ENCODE measurements at regions of chr11 and their contacts with region 1.

Region 1: GRCh38 chr11:64317957-64318693 is at the start of gene PRDX5:
- DNase-seq: peak; percentile 96
- ATAC-seq: peak; percentile 80
- H3K4me3 Mint-ChIP-seq: peak within 1 kb of the TSS; percentile 89
- H3K27ac Mint-ChIP-seq: peak within 1 kb of the TSS; percentile 100
- H3K4me1 Mint-ChIP-seq: peaks cover 47% of the 10 kb centered on the region
- H3K27me3 Mint-ChIP-seq: no peaks in the 10 kb centered on the region
- total RNA-seq, gene PRDX5: 102 to 106 TPM

Region 2: GRCh38 chr11:64240394-64241174 is 77.5 kb before region 1 on chr11 and contains the start of gene FKBP2:
- CTCF ChIA-PET with region 1: interaction called, 4 read pairs
- POLR2A ChIA-PET with region 1: interaction called, 12 read pairs
- DNase-seq: peak; percentile 98
- ATAC-seq: peak; percentile 76
- H3K4me3 Mint-ChIP-seq: peak within 1 kb of the TSS; percentile 89
- H3K27ac Mint-ChIP-seq: peak within 1 kb of the TSS; percentile 98
- H3K4me1 Mint-ChIP-seq: peaks cover 44% of the 10 kb centered on the region
- H3K27me3 Mint-ChIP-seq: no peaks in the 10 kb centered on the region
- total RNA-seq, gene FKBP2: 26.9 to 33.0 TPM

Region 3: GRCh38 chr11:64269380-64270234 is 48.5 kb before region 1 on chr11:
- CTCF ChIA-PET with region 1: interaction called, 12 read pairs
- POLR2A ChIA-PET with region 1: interaction called, 23 read pairs
- DNase-seq: peak; percentile 97
- ATAC-seq: peak; percentile 74
- H3K4me3 Mint-ChIP-seq: peak overlapping the region; percentile 93
- H3K27ac Mint-ChIP-seq: peak overlapping the region; percentile 97
- H3K4me1 Mint-ChIP-seq: peaks cover 34% of the 10 kb centered on the region
- H3K27me3 Mint-ChIP-seq: no peaks in the 10 kb centered on the region

Region 4: DNA sequence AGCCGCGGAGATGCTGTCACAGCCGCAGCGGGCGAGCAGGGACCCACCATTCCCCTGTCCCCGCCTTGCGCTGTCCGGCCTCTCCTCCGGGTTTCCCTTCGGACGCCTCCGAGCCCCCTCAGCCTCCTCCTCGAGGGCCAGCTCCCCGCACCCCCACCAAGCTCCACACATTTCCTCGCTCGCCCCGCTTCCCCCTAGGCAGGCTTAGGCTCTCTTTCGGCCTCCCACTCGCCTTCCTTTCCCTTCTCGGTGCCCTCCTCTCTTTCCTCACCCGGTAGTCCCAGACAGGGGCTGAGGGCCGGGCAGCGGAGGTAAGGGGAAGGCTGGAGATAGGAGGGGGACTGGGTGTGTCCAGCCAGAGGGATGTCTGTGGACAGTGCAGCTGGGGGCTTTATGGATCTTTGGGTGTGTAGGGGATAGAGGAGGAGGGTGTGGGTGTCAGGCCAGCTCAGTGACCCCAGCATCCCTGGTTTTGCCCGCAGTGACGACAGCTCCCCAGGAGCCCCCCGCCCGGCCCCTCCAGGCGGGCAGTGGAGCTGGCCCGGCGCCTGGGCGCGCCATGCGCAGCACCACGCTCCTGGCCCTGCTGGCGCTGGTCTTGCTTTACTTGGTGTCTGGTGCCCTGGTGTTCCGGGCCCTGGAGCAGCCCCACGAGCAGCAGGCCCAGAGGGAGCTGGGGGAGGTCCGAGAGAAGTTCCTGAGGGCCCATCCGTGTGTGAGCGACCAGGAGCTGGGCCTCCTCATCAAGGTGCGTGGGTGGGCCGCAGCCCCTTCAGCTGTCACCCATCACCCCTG is 25.5 kb before region 1 on chr11:
- CTCF ChIA-PET with region 1: no interaction called
- POLR2A ChIA-PET with region 1: no interaction called
- DNase-seq: no peak
- ATAC-seq: peak; percentile 6
- H3K4me3 Mint-ChIP-seq: no peak overlapping the region
- H3K27ac Mint-ChIP-seq: no peak overlapping the region
- H3K4me1 Mint-ChIP-seq: peaks cover 17% of the 10 kb centered on the region
- H3K27me3 Mint-ChIP-seq: peaks cover 62% of the 10 kb centered on the region

Region 5: GRCh38 chr11:64331557-64332371 is 13.6 kb after region 1 on chr11:
- CTCF ChIA-PET with region 1: interaction called, 137 read pairs
- POLR2A ChIA-PET with region 1: interaction called, 44 read pairs
- DNase-seq: peak; percentile 89
- ATAC-seq: peak; percentile 95
- H3K4me3 Mint-ChIP-seq: peak overlapping the region; percentile 1
- H3K27ac Mint-ChIP-seq: peak overlapping the region; percentile 86
- H3K4me1 Mint-ChIP-seq: peaks cover 38% of the 10 kb centered on the region
- H3K27me3 Mint-ChIP-seq: peaks cover 2% of the 10 kb centered on the region

Region 6: GRCh38 chr11:64341851-64342791 is 24.0 kb after region 1 on chr11:
- CTCF ChIA-PET with region 1: interaction called, 47 read pairs
- POLR2A ChIA-PET with region 1: interaction called, 37 read pairs
- DNase-seq: peak; percentile 95
- ATAC-seq: peak; percentile 84
- H3K4me3 Mint-ChIP-seq: peak overlapping the region; percentile 80
- H3K27ac Mint-ChIP-seq: no peak overlapping the region
- H3K4me1 Mint-ChIP-seq: peaks cover 55% of the 10 kb centered on the region
- H3K27me3 Mint-ChIP-seq: no peaks in the 10 kb centered on the region

Region 7: DNA sequence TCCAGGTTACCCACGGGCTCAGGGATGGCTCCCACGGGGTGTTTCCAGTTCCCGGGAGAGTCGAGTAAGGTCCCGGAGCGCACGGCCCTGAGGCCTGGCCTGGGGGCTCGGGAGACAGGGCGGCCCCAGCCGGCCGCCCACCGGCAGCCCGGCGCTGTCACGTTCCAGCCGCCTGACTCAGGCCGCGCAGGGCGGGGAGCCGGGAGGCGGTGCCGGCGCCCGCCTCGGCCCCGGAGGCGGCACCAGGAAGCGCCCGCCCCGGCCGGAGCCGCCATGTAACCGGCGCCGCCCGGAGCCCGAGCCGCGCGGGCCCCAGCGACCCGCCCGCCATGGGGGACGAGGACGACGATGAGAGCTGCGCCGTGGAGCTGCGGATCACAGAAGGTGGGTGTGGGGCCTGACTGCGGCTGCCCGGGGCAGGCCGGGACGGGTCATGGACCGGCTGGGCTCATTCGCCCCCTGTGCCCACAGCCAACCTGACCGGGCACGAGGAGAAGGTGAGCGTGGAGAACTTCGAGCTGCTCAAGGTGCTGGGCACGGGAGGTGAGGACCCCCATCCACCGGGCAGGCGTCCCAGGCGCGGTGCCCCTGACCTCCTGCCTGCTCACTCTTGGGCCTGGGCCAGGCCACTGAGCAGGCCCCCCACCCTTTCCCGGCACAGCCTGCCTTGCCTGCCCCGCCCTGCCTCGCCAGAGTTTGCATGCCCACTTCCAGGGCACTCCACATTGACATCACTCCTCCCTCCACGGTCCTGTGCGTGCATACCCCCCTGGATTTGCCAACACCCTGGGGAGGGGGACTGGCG is 41.0 kb after region 1 on chr11 and contains the start of gene RPS6KA4:
- CTCF ChIA-PET with region 1: interaction called, 15 read pairs
- POLR2A ChIA-PET with region 1: interaction called, 3 read pairs
- DNase-seq: peak; percentile 51
- ATAC-seq: peak; percentile 87
- H3K4me3 Mint-ChIP-seq: peak within 1 kb of the TSS; percentile 82
- H3K27ac Mint-ChIP-seq: peak within 1 kb of the TSS; percentile 79
- H3K4me1 Mint-ChIP-seq: peaks cover 51% of the 10 kb centered on the region
- H3K27me3 Mint-ChIP-seq: no peaks in the 10 kb centered on the region
- total RNA-seq, gene RPS6KA4: 39.0 to 42.3 TPM

Region 8: GRCh38 chr11:64369440-64370211 is 51.5 kb after region 1 on chr11:
- CTCF ChIA-PET with region 1: no interaction called
- POLR2A ChIA-PET with region 1: no interaction called
- DNase-seq: no peak
- ATAC-seq: no peak
- H3K4me3 Mint-ChIP-seq: no peak overlapping the region
- H3K27ac Mint-ChIP-seq: no peak overlapping the region
- H3K4me1 Mint-ChIP-seq: no peaks in the 10 kb centered on the region
- H3K27me3 Mint-ChIP-seq: peaks cover 3% of the 10 kb centered on the region

Region 9: DNA sequence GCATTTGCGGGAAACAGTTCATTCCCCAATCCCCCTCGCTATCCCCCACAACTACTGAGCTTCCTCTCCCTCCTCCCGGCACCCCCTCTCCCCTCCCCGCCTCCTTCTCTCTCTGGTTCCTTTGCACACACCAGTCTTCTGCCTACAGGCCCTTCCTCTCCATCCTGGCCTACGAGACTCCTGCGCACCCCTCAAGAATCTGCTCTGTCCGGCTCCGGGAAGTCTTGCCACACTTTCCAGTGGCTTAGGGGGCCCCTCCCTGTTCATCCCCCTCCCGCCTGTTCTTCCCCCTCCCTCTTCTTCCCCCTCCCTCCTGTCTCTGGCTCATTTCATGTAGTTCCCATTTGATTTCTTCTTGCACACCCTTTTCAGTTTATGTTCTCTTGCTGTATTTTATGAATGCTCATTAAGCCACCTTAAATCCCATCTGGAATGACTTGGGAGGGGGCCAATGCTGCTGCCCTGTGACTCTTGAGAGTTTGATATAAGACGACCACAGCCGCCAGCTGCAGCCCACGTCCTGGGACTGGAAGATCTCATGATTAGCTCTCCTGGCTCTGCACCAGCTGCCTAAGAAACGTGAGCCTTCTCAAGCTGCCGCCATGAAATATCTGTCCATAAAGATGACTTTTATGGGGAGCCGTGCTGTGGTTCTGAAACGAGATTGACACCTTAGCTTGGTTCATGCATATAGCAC is 91.7 kb after region 1 on chr11:
- CTCF ChIA-PET with region 1: no interaction called
- POLR2A ChIA-PET with region 1: no interaction called
- DNase-seq: no peak
- ATAC-seq: no peak
- H3K4me3 Mint-ChIP-seq: no peak overlapping the region
- H3K27ac Mint-ChIP-seq: no peak overlapping the region
- H3K4me1 Mint-ChIP-seq: no peaks in the 10 kb centered on the region
- H3K27me3 Mint-ChIP-seq: peaks cover 9% of the 10 kb centered on the region

Measured in activated CD8-positive, alpha-beta T cell treated with anti-CD3 and anti-CD28 coated beads, Interleukin-2, amount 10 ng/mL, durations not matched to agents 7 days and 5 days (primary cell).